Caco-2 (cell line): ENCODE measurements at regions of chr12 and their contacts with region 1.

Region 1: DNA sequence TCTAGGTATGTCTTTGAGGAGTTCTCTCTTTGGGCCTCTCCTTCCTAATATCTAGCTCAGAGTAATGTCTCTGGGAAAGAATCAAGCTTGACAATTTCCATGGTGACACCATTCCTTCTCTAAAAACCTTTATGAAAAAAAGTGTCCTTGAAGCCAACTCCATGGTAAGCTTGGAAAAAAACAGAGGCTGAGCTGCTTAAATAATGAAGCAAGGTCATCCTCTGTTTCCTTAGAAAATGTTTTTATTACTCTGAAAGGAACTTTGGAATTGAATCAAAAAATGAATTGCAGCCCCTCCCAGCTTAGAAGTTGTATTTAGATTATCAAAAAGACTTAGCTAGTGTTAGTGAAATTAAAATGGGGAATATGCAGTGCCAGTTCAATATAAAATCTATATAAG is 166.1 kb upstream of the KITLG start:
- DNase-seq: no peak
- H3K4me3 ChIP-seq: no peak overlapping the region
- H3K4me3 Mint-ChIP-seq: no peak overlapping the region
- H3K27ac Mint-ChIP-seq: no peak overlapping the region
- H3K4me1 ChIP-seq: peaks cover 52% of the 10 kb centered on the region
- H3K4me1 Mint-ChIP-seq: peaks cover 25% of the 10 kb centered on the region
- H3K27me3 ChIP-seq: no peaks in the 10 kb centered on the region
- H3K27me3 Mint-ChIP-seq: no peaks in the 10 kb centered on the region
- CTCF ChIP-seq: no peak

Region 2: GRCh38 chr12:86903159-86903558 is 1843.2 kb before region 1 on chr12:
- CTCF ChIA-PET with region 1: no interaction called
- POLR2A ChIA-PET with region 1: no interaction called
- intact Hi-C with region 1: no loop called
- DNase-seq: no peak
- H3K4me3 ChIP-seq: no peak overlapping the region
- H3K4me3 Mint-ChIP-seq: no peak overlapping the region
- H3K27ac Mint-ChIP-seq: no peak overlapping the region
- H3K4me1 ChIP-seq: no peaks in the 10 kb centered on the region
- H3K4me1 Mint-ChIP-seq: no peaks in the 10 kb centered on the region
- H3K27me3 ChIP-seq: no peaks in the 10 kb centered on the region
- H3K27me3 Mint-ChIP-seq: no peaks in the 10 kb centered on the region
- CTCF ChIP-seq: no peak

Region 3: GRCh38 chr12:88580051-88580871 is 166.1 kb before region 1 on chr12 and contains the start of gene KITLG:
- CTCF ChIA-PET with region 1: no interaction called
- POLR2A ChIA-PET with region 1: no interaction called
- intact Hi-C with region 1: loop called (anchors 5 kb)
- DNase-seq: peak; percentile 90 to 94
- H3K4me3 ChIP-seq: peak within 1 kb of the TSS; percentile 74
- H3K4me3 Mint-ChIP-seq: peak within 1 kb of the TSS; percentile 86
- H3K27ac Mint-ChIP-seq: peak within 1 kb of the TSS; percentile 87
- H3K4me1 ChIP-seq: peaks cover 14% of the 10 kb centered on the region
- H3K4me1 Mint-ChIP-seq: no peaks in the 10 kb centered on the region
- H3K27me3 ChIP-seq: no peaks in the 10 kb centered on the region
- H3K27me3 Mint-ChIP-seq: no peaks in the 10 kb centered on the region
- CTCF ChIP-seq: peak in 1 of 2 experiments; percentile 43
- total RNA-seq, gene KITLG: 200 and 211 TPM in 2 replicates

Region 4: DNA sequence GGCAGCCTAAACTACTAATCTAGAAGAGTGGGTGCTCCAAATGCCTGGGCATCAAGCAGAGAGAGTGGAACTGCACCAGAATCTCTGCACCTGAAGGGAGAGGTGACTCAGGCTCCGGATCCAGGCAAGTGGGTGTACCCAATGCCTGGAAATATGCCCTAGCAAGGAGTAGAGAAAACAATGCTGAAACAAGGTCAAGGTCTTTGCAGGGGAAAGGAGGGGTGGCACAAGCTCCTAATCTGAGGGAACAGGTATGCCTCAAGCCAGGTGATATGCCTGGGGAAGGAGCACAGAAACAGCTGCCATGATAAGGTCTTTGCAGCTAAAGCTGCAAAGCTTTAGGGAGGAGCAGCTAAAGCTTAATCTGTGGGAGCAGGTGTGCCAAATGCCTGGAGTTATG is 30.1 kb before region 1 on chr12:
- CTCF ChIA-PET with region 1: no interaction called
- POLR2A ChIA-PET with region 1: no interaction called
- intact Hi-C with region 1: loop called (anchors 2 kb)
- DNase-seq: peak; percentile 11 to 38
- H3K4me3 ChIP-seq: no peak overlapping the region
- H3K4me3 Mint-ChIP-seq: no peak overlapping the region
- H3K27ac Mint-ChIP-seq: peak overlapping the region; percentile 62
- H3K4me1 ChIP-seq: peaks cover 30% of the 10 kb centered on the region
- H3K4me1 Mint-ChIP-seq: peaks cover 9% of the 10 kb centered on the region
- H3K27me3 ChIP-seq: no peaks in the 10 kb centered on the region
- H3K27me3 Mint-ChIP-seq: no peaks in the 10 kb centered on the region
- CTCF ChIP-seq: no peak